Activated CD4-positive, alpha-beta memory T cell treated with anti-CD3 and anti-CD28 coated beads, Interleukin-2, amount 10 ng/mL, durations not matched to agents 7 days and 5 days (primary cell): ENCODE measurements at regions of chr14 and their contacts with region 1.

Region 1: GRCh38 chr14:34322940-34323418 is 139.1 kb downstream of the SPTSSA start:
- DNase-seq: peak; percentile 77
- H3K4me3 Mint-ChIP-seq: no peak overlapping the region
- H3K27ac Mint-ChIP-seq: no peak overlapping the region
- H3K4me1 Mint-ChIP-seq: no peaks in the 10 kb centered on the region
- H3K27me3 Mint-ChIP-seq: peaks cover 9% of the 10 kb centered on the region

Region 2: GRCh38 chr14:33839193-33840076 is 483.5 kb before region 1 on chr14:
- CTCF ChIA-PET with region 1: interaction called, 10 read pairs
- POLR2A ChIA-PET with region 1: no interaction called
- DNase-seq: peak; percentile 61
- H3K4me3 Mint-ChIP-seq: no peak overlapping the region
- H3K27ac Mint-ChIP-seq: no peak overlapping the region
- H3K4me1 Mint-ChIP-seq: peaks cover 7% of the 10 kb centered on the region
- H3K27me3 Mint-ChIP-seq: no peaks in the 10 kb centered on the region

Region 3: DNA sequence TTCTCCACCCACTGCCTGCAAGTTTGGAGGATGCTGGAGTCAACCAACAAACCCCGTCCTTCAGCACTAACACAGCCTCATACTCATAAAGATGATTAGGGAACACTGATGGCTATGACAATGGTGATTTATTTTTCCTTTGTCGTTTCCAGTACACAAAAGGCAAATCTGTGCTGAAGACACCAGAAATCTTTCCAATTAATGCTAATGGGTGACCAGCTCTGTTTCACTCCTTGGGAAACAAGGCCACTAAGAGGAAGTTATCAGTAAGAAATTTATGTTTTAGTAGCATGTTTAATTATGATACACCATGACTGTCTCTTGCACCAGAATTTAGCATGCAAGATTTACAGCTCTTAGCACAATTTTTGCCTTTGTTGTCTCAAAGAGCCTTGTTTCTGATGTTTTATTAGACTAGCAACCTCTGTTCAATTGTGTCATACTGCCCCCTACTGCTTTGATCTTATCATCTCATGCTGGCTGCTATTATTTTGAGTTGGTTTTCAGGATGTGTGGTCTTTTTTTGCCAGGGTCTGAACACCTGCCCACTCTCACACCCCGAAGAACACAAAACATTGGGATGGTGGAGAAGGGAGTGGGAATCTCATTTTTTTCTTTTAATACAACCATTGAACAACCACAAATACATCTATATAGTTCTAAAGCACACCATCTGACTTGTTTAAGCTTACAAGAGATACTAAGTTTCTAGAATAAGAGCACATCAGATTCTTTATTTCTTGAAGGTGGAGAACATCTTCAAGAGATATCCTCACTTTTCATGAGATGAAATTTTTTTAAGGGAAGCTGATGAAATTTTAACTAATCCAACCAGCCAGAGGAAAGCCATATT is 21.9 kb before region 1 on chr14:
- CTCF ChIA-PET with region 1: interaction called, 13 read pairs
- POLR2A ChIA-PET with region 1: interaction called, 3 read pairs
- DNase-seq: no peak
- H3K4me3 Mint-ChIP-seq: no peak overlapping the region
- H3K27ac Mint-ChIP-seq: no peak overlapping the region
- H3K4me1 Mint-ChIP-seq: no peaks in the 10 kb centered on the region
- H3K27me3 Mint-ChIP-seq: peaks cover 7% of the 10 kb centered on the region

Region 4: GRCh38 chr14:34507459-34507858 is 184.5 kb after region 1 on chr14:
- CTCF ChIA-PET with region 1: no interaction called
- POLR2A ChIA-PET with region 1: no interaction called
- DNase-seq: no peak
- H3K4me3 Mint-ChIP-seq: no peak overlapping the region
- H3K27ac Mint-ChIP-seq: no peak overlapping the region
- H3K4me1 Mint-ChIP-seq: no peaks in the 10 kb centered on the region
- H3K27me3 Mint-ChIP-seq: no peaks in the 10 kb centered on the region